GM23248 (cell line): ENCODE measurements at regions of chr19 and their contacts with region 1.

Region 1: GRCh38 chr19:56637976-56638555 is 4.9 kb upstream of the SMIM17 start:
- DNase-seq: peak; percentile 81
- H3K4me3 ChIP-seq: no peak overlapping the region
- H3K27ac ChIP-seq: no peak overlapping the region
- H3K4me1 ChIP-seq: no peaks in the 10 kb centered on the region
- H3K27me3 ChIP-seq: no peaks in the 10 kb centered on the region

Region 2: DNA sequence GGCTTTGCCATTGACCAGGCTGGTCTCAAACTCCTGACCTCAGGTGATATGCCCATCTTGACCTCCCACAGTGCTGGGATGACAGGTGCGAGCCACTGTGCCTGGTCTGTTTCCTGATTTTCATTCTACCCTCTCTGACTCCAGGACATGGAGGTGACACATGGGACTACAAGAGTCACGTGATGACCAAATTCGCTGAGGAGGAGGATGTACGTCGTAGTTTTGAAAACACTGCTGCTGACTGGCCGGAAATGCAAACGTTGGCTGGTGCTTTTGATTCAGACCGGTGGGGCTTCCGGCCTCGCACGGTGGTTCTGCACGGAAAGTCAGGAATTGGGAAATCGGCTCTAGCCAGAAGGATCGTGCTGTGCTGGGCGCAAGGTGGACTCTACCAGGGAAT is 611.3 kb before region 1 on chr19:
- in situ Hi-C with region 1: loop called (anchors 25 kb)
- DNase-seq: no peak
- H3K4me3 ChIP-seq: no peak overlapping the region
- H3K27ac ChIP-seq: no peak overlapping the region
- H3K4me1 ChIP-seq: no peaks in the 10 kb centered on the region
- H3K27me3 ChIP-seq: no peaks in the 10 kb centered on the region